GM12878 (cell line): ENCODE measurements at regions of chr5 and their contacts with region 1.

Region 1: GRCh38 chr5:148998174-148998797 is 64.6 kb downstream of the SH3TC2 start:
- DNase-seq: no peak
- ATAC-seq: peak; percentile 86
- H3K4me3 ChIP-seq: no peak overlapping the region
- H3K27ac ChIP-seq: no peak overlapping the region
- H3K4me1 ChIP-seq: no peaks in the 10 kb centered on the region
- H3K27me3 ChIP-seq: no peaks in the 10 kb centered on the region
- CTCF ChIP-seq: peak; percentile 49 to 56 (median 52); a peak in 5 of 6 replicates
- EP300 ChIP-seq: no peak
- POLR2A ChIP-seq: no peak
- RAD21 ChIP-seq: peak; percentile 56

Region 2: GRCh38 chr5:148939676-148940075 is 58.6 kb before region 1 on chr5:
- CTCF ChIA-PET with region 1: no interaction called
- POLR2A ChIA-PET with region 1: no interaction called
- RAD21 ChIA-PET with region 1: no interaction called
- SMC1A ChIA-PET with region 1: no interaction called
- in situ Hi-C with region 1: no loop called
- intact Hi-C with region 1: no loop called
- DNase-seq: no peak
- ATAC-seq: no peak
- H3K4me3 ChIP-seq: no peak overlapping the region
- H3K27ac ChIP-seq: no peak overlapping the region
- H3K4me1 ChIP-seq: no peaks in the 10 kb centered on the region
- H3K27me3 ChIP-seq: no peaks in the 10 kb centered on the region; a peak in 1 of 4 replicates
- CTCF ChIP-seq: no peak
- EP300 ChIP-seq: no peak
- POLR2A ChIP-seq: no peak
- RAD21 ChIP-seq: no peak

Region 3: GRCh38 chr5:148976569-148977313 is 21.5 kb before region 1 on chr5:
- CTCF ChIA-PET with region 1: interaction called, 10 read pairs
- POLR2A ChIA-PET with region 1: no interaction called
- RAD21 ChIA-PET with region 1: no interaction called
- SMC1A ChIA-PET with region 1: no interaction called
- in situ Hi-C with region 1: no loop called
- intact Hi-C with region 1: no loop called
- DNase-seq: no peak
- ATAC-seq: no peak
- H3K4me3 ChIP-seq: no peak overlapping the region
- H3K27ac ChIP-seq: no peak overlapping the region
- H3K4me1 ChIP-seq: no peaks in the 10 kb centered on the region
- H3K27me3 ChIP-seq: peaks cover 0 to 9% of the 10 kb centered on the region in 2 experiments; a peak in 2 of 4 replicates
- CTCF ChIP-seq: no peak
- EP300 ChIP-seq: no peak
- POLR2A ChIP-seq: no peak
- RAD21 ChIP-seq: no peak